ENCODE measurements at regions of chr1 and their contacts with region 1.

Region 1: GRCh38 chr1:162056043-162056442 is 13.4 kb upstream of the NOS1AP start:
- DNase-seq: peak; percentile 39
- H3K4me3 ChIP-seq: no peak overlapping the region
- H3K27ac ChIP-seq: no peak overlapping the region
- H3K4me1 ChIP-seq: no peaks in the 10 kb centered on the region
- CTCF ChIP-seq: peak; percentile 81

Region 2: DNA sequence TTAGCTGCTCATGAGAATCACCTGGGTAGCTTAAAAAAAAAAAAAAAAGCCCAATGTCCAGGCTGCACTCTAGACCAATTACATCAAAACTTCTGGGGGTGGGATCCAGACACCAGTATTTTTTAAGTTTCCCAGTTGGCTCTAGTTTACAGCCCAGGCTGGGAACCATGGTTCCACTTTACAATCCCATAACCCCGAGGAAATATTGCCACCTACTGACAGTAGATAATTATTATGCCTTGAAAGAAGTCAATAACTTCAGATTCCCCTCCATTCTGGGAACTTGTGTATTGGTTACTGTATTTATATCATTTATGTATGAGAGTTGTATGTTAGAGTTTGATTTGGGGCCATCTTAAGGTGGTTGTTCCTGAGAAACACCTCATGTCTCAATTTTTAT is 220.4 kb after region 1 on chr1:
- CTCF ChIA-PET with region 1: no interaction called
- POLR2A ChIA-PET with region 1: no interaction called
- intact Hi-C with region 1: loop called (anchors 5 kb)
- DNase-seq: peak; percentile 10
- H3K4me3 ChIP-seq: no peak overlapping the region
- H3K27ac ChIP-seq: no peak overlapping the region
- H3K4me1 ChIP-seq: no peaks in the 10 kb centered on the region
- CTCF ChIP-seq: peak; percentile 73

Region 3: DNA sequence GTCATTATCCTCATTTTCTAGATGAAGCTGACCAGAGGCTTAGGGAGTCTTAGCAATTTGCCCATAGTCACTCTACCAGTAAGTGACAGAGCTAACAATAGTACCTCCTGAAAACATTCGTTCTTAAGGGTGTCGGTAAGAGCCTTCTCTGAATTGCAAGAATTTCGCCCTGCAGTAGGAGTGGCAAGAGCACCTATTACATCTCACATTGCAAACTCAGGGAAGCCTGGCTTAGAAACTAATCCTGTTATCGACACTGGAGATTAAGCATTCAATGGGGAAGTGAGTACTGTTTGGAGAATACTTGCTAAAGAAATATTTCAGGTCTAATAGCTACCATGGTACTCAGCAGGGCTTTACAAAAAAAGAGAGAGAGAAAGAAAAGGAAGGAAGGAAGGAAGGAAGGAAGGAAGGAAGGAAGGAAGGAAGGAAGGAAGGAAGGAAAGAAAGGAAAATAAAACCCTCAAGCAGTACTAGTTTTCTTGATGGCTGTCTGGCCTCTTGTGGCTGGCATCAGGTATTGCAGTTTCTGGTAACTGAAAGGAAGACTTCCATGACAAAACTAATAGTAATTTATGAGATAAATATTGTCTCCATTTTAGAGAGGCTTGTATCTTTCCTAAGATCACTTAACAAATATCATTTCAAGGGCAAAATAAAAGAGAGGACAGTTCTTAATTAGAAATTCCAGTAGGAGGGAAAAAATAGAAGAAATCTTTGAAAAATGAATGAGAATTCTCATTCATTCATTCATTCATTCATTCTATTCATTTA is 335.9 kb after region 1 on chr1:
- CTCF ChIA-PET with region 1: no interaction called
- POLR2A ChIA-PET with region 1: no interaction called
- intact Hi-C with region 1: loop called (anchors 2 kb)
- DNase-seq: peak; percentile 35
- H3K4me3 ChIP-seq: no peak overlapping the region
- H3K27ac ChIP-seq: no peak overlapping the region
- H3K4me1 ChIP-seq: no peaks in the 10 kb centered on the region
- CTCF ChIP-seq: peak; percentile 84